ENCODE measurements at regions of chrX and their contacts with region 1.

Region 1: GRCh38 chrX:103686199-103687072 is at the start of gene MORF4L2:
- DNase-seq: peak; percentile 77 to 94
- ATAC-seq: peak; percentile 81 to 92 (median 85)
- H3K4me3 ChIP-seq: peak within 1 kb of the TSS; percentile 97
- H3K4me3 Mint-ChIP-seq: peak within 1 kb of the TSS; percentile 66
- H3K27ac ChIP-seq: peak within 1 kb of the TSS; percentile 98
- H3K27ac Mint-ChIP-seq: no peak within 1 kb of the TSS
- H3K4me1 ChIP-seq: no peaks in the 10 kb centered on the region
- H3K4me1 Mint-ChIP-seq: peaks cover 4 to 5% of the 10 kb centered on the region in 2 donors
- H3K27me3 ChIP-seq: no peaks in the 10 kb centered on the region
- H3K27me3 Mint-ChIP-seq: no peaks in the 10 kb centered on the region
- CTCF ChIP-seq: no peak
- total RNA-seq, gene MORF4L2: 136 to 227 (median 141) TPM

Region 2: DNA sequence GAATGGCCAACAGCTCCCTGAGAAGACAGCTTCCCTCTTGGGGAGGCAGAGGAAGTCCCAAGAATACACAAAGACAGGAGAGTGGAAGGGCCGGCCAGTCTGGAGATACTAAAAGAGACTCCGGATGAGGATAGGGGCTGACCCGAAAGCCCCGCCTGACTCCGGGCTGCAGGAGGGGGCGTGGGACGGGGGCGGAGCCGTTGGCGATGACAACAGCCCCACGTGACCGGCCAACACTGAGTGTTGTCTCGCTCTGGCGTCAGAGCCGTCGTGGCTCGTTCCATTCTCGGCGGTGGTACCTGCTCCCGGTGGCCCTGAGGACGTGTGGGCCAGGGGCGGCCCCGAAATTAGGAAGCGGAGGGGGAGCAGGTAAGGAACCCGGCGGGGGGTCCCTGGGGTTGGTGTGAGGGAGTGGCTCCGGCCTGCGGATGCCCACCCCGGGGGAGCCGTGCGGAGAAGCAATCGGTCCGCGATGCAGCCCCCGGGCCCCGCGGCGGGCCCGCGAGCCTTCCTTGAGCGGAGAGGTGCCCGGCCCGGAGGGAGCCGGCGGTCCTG is 471.5 kb before region 1 on chrX and contains the start of gene BEX4:
- intact Hi-C with region 1: loop called (anchors 5 kb)
- DNase-seq: peak; percentile 80 to 89
- ATAC-seq: peak; percentile 92 to 97 (median 94)
- H3K4me3 ChIP-seq: peak within 1 kb of the TSS; percentile 82
- H3K4me3 Mint-ChIP-seq: peak within 1 kb of the TSS; percentile 94
- H3K27ac ChIP-seq: peak within 1 kb of the TSS; percentile 95
- H3K27ac Mint-ChIP-seq: peak within 1 kb of the TSS; percentile 81 to 94
- H3K4me1 ChIP-seq: peaks cover 13% of the 10 kb centered on the region
- H3K4me1 Mint-ChIP-seq: peaks cover 0 to 11% of the 10 kb centered on the region in 2 donors
- H3K27me3 ChIP-seq: no peaks in the 10 kb centered on the region
- H3K27me3 Mint-ChIP-seq: peaks cover 1 to 18% of the 10 kb centered on the region in 2 donors
- CTCF ChIP-seq: no peak
- total RNA-seq, gene BEX4: 30.8 to 53.4 (median 47.1) TPM

Region 3: DNA sequence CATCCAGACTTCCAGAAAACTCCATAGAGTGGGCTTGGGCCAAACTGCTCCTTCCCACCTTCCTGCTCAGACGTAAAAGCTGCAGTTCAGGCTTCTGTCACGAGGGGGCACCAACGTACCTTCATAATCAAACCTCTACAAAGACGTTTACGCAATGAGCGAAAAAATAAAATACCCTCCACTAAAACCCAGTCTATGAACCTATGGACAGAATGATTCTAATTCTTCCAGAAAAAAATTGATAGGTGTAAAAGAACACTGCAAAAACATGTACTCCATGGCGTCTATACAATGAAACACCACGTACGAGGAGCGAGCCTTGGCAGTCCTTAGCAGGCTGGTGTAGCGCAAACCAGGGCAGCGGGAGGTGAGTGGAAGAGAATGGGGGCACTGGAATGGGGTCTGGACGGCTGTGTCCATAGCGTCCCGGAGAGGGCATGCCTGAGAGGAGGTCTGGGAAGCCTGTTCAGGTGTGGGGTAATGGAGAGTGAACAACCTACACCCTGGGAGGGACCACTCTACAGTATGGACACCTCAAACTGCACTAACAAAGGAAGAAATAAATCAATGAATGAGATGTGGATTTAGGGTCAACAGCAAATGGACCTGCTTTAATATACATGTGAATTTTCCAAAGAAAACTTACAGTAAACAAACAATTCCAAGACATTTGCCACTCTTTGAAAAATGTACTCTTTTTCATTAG is 152.8 kb before region 1 on chrX:
- intact Hi-C with region 1: loop called (anchors 5 kb)
- DNase-seq: peak; percentile 60 to 79
- ATAC-seq: peak; percentile 70 to 83 (median 75)
- H3K4me3 ChIP-seq: no peak overlapping the region
- H3K4me3 Mint-ChIP-seq: peak overlapping the region; percentile 51
- H3K27ac ChIP-seq: no peak overlapping the region
- H3K27ac Mint-ChIP-seq: no peak overlapping the region
- H3K4me1 ChIP-seq: peaks cover 3% of the 10 kb centered on the region
- H3K4me1 Mint-ChIP-seq: peaks cover 4 to 6% of the 10 kb centered on the region in 2 donors
- H3K27me3 ChIP-seq: no peaks in the 10 kb centered on the region
- H3K27me3 Mint-ChIP-seq: peaks cover 3 to 21% of the 10 kb centered on the region in 2 donors
- CTCF ChIP-seq: peak; percentile 63

Region 4: DNA sequence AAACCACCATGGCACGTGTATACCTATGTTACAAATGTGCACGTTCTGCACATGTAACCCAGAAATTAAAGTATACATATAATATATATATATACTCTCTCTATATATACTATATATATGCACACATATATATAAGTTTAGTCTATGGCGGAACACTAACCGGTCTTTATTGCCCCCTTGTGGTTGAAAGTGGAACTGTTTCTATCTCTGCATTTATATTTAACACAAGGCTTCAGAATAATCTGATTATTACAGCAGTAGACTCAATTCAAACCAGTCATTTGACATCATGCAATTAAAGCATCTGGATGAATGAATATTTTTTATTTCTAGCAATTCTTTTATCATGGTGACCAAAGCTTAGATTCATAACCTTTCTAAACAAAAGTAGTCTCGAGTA is 131.1 kb after region 1 on chrX:
- intact Hi-C with region 1: loop called (anchors 1 kb)
- DNase-seq: peak in 1 of 2 donors; percentile 74
- ATAC-seq: peak in 2 of 3 donors; percentile 64 to 79
- H3K4me3 ChIP-seq: no peak overlapping the region
- H3K4me3 Mint-ChIP-seq: no peak overlapping the region
- H3K27ac ChIP-seq: no peak overlapping the region
- H3K27ac Mint-ChIP-seq: no peak overlapping the region
- H3K4me1 ChIP-seq: no peaks in the 10 kb centered on the region
- H3K4me1 Mint-ChIP-seq: no peaks in the 10 kb centered on the region
- H3K27me3 ChIP-seq: no peaks in the 10 kb centered on the region
- H3K27me3 Mint-ChIP-seq: peaks cover 4 to 19% of the 10 kb centered on the region in 2 donors
- CTCF ChIP-seq: peak; percentile 71

Region 5: GRCh38 chrX:104113222-104113965 is 427.0 kb after region 1 on chrX:
- intact Hi-C with region 1: loop called (anchors 2 kb)
- DNase-seq: peak in 1 of 2 donors; percentile 78
- ATAC-seq: peak; percentile 32 to 62 (median 46)
- H3K4me3 ChIP-seq: peak overlapping the region; percentile 81
- H3K4me3 Mint-ChIP-seq: peak overlapping the region; percentile 93
- H3K27ac ChIP-seq: peak overlapping the region; percentile 88
- H3K27ac Mint-ChIP-seq: peak overlapping the region; percentile 86 to 94
- H3K4me1 ChIP-seq: peaks cover 44% of the 10 kb centered on the region
- H3K4me1 Mint-ChIP-seq: peaks cover 20 to 66% of the 10 kb centered on the region in 2 donors
- H3K27me3 ChIP-seq: no peaks in the 10 kb centered on the region
- H3K27me3 Mint-ChIP-seq: no peaks in the 10 kb centered on the region
- CTCF ChIP-seq: peak; percentile 20

Region 6: DNA sequence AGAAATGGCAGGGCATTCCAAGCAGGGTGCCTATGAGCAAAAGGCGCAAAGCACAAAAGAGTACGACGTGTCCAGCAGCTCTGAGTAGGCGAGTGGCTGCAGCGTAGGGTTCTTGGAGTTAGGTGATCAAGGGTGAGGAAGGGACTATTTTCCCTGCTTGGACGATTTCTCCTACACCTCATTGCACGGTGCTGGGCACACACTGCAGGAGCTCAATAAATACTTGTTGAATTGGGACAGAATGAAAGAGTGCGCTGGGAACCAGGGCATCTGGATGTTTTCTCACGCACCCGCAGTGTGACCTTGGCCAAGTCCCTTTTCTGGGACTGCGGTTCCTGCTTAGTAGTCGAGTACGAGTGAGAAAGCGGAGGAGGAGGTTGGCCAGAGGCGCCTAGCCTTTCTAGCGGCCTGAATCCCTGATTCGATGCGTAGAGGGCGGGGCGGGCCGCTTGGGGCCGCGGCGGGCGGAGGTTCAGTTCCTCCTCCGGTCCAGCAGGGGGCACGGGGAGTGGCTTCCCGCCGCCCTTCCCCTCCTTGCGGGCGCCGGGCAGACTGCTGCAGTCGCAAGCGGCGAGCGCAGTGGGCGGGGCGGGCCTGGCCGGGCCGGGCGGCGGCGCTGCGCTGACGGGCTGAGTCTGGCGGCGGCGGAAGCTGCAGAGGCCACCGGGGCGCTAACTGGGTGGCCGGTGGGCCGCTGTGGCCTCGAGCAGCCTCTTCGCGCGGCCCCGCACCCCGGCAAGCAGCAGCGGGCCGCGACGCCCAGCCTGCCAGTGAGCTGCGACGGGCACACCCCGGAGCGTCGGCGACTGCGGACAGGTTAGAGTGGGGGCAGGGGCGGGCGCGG is 479.7 kb after region 1 on chrX and contains the start of gene FAM199X:
- intact Hi-C with region 1: loop called (anchors 2 kb)
- DNase-seq: peak; percentile 79 to 88
- ATAC-seq: peak; percentile 97 to 100 (median 97)
- H3K4me3 ChIP-seq: peak within 1 kb of the TSS; percentile 87
- H3K4me3 Mint-ChIP-seq: peak within 1 kb of the TSS; percentile 90
- H3K27ac ChIP-seq: peak within 1 kb of the TSS; percentile 75
- H3K27ac Mint-ChIP-seq: peak within 1 kb of the TSS; percentile 85 to 87
- H3K4me1 ChIP-seq: peaks cover 10% of the 10 kb centered on the region
- H3K4me1 Mint-ChIP-seq: peaks cover 38 to 42% of the 10 kb centered on the region in 2 donors
- H3K27me3 ChIP-seq: no peaks in the 10 kb centered on the region
- H3K27me3 Mint-ChIP-seq: peaks cover 0 to 17% of the 10 kb centered on the region in 2 donors
- CTCF ChIP-seq: peak; percentile 68
- total RNA-seq, gene FAM199X: 31.9 to 35.9 (median 32.6) TPM

Measured in natural killer cell (primary cell).